Heart right ventricle (tissue), 16 donors: ENCODE measurements at regions of chr2 and their contacts with region 1.

Region 1: GRCh38 chr2:204691911-204692510 is 146.7 kb downstream of the PARD3B start:
- DNase-seq: peak in 1 of 2 donors; percentile 67
- ATAC-seq: peak in 7 of 8 donors; percentile 75 to 90 (median 85)
- H3K4me3 ChIP-seq: no peak overlapping the region
- H3K27ac ChIP-seq: peak overlapping the region in 1 of 10 donors; percentile 37
- H3K4me1 ChIP-seq: peaks cover 0 to 14% (median 3%) of the 10 kb centered on the region in 9 donors
- H3K27me3 ChIP-seq: no peaks in the 10 kb centered on the region
- CTCF ChIP-seq: peak; percentile 48 to 90 (median 76)

Region 2: GRCh38 chr2:204545023-204545860 is 146.8 kb before region 1 on chr2 and contains the start of gene PARD3B:
- intact Hi-C with region 1: loop called in 1 of 10 experiments (anchors 10 kb)
- DNase-seq: peak; percentile 37 to 65
- ATAC-seq: peak; percentile 93 to 99 (median 96)
- H3K4me3 ChIP-seq: peak within 1 kb of the TSS; percentile 84 to 98 (median 94)
- H3K27ac ChIP-seq: peak within 1 kb of the TSS; percentile 54 to 85 (median 76)
- H3K4me1 ChIP-seq: peaks cover 0 to 29% (median 21%) of the 10 kb centered on the region in 9 donors
- H3K27me3 ChIP-seq: peaks cover 0 to 28% (median 0%) of the 10 kb centered on the region in 7 donors
- CTCF ChIP-seq: no peak
- total RNA-seq, gene PARD3B: 6.7 to 12.4 (median 8.9) TPM